Cardiac septum (tissue), 1 donor: ENCODE measurements at regions of chr1 and their contacts with region 1.

Region 1: GRCh38 chr1:11882814-11883538 is 24.2 kb upstream of the NPPB start:
- DNase-seq: peak; percentile 92

Region 2: GRCh38 chr1:11790880-11791715 is 91.9 kb before region 1 on chr1:
- intact Hi-C with region 1: loop called (anchors 2 kb)
- DNase-seq: peak; percentile 94

Region 3: GRCh38 chr1:11858968-11859871 is 23.8 kb before region 1 on chr1:
- intact Hi-C with region 1: loop called (anchors 1 kb)
- DNase-seq: peak; percentile 89

Region 4: GRCh38 chr1:11990303-11991032 is 107.5 kb after region 1 on chr1:
- intact Hi-C with region 1: loop called (anchors 2 kb)
- DNase-seq: peak; percentile 85